H1 (cell line): ENCODE measurements at regions of chr10 and their contacts with region 1.

Region 1: DNA sequence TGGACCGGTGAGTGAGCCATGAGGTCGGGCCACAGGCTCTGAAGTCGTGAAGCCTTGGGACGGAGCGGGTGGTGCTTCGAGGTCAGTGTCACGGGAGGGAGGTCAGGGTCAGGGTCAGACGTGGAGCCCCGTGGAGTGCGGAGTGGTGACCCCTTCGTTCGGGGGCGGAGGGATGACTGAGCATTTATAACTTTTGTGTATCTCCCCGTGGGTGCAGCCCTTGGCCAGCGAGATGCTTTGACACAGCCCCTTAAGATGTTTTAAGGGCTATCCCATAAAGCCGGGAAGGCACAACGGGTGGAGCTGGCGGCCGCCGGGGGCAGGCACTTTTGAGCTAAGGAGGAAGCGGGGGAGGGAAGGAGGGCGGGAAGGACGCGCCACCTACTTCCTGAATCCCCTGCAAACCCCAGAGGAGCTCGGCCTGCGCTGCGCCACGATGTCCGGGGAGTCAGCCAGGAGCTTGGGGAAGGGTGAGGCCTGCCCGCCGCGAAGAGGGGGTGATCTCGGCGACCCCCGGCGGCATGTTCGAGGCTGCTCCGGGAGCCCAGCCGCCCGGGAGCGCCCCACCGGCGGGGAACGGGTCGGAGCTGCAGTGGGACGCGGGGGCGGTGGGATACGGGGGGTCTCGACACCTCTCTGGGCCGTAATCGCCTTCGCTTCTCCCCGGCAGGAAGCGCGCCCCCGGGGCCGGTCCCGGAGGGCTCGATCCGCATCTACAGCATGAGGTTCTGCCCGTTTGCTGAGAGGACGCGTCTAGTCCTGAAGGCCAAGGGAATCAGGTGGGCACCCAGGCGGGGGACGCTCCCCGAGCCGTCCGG is at the start of gene GSTO1:
- DNase-seq: peak in 1 of 2 experiments; percentile 67
- H3K4me3 ChIP-seq: peak within 1 kb of the TSS; percentile 70 to 76 (median 73)
- H3K27ac ChIP-seq: no peak within 1 kb of the TSS
- H3K4me1 ChIP-seq: peaks cover 5 to 22% (median 18%) of the 10 kb centered on the region in 4 experiments
- H3K27me3 ChIP-seq: peaks cover 0 to 9% (median 5%) of the 10 kb centered on the region in 4 experiments; a peak in 5 of 7 replicates
- CTCF ChIP-seq: no peak
- EP300 ChIP-seq: no peak
- POLR2A ChIP-seq: no peak
- RAD21 ChIP-seq: no peak
- total RNA-seq, gene GSTO1: 32.5 and 33.8 TPM in 2 replicates

Region 2: GRCh38 chr10:104268716-104269645 is 14.3 kb after region 1 on chr10 and contains the start of gene GSTO2:
- CTCF ChIA-PET with region 1: interaction called, 21 read pairs
- POLR2A ChIA-PET with region 1: interaction called, 81 read pairs
- DNase-seq: peak; percentile 97
- H3K4me3 ChIP-seq: peak within 1 kb of the TSS; percentile 91 to 98 (median 96)
- H3K27ac ChIP-seq: peak within 1 kb of the TSS; percentile 80
- H3K4me1 ChIP-seq: peaks cover 0 to 4% (median 2%) of the 10 kb centered on the region in 4 experiments; a peak in 2 of 7 replicates
- H3K27me3 ChIP-seq: no peaks in the 10 kb centered on the region
- CTCF ChIP-seq: no peak; a peak in 1 of 4 replicates
- EP300 ChIP-seq: no peak
- POLR2A ChIP-seq: peak; percentile 89 to 97
- RAD21 ChIP-seq: no peak
- total RNA-seq, gene GSTO2: 12.7 and 13.1 TPM in 2 replicates